ENCODE measurements at regions of chr10 and their contacts with region 1.

Region 1: DNA sequence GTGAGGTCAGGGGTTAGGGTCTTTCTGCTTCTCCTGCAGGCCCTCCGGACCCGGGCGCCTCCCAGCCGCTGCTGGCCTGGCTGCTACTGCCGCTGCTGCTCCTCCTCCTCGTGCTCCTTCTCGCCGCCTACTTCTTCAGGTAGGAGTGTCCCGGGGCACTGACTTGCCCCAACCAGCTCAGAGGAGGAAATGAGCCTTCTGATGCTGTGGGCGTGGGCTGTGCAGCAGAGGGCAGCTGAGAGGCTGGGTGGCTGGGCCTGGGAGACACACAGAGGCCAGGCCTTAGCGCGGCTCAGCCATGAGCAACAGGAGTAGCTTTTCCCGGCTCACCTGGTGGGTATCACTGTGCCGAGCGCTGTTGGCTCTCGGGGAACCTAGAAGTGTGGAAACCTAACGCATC is 78.9 kb downstream of the MKI67 start:
- DNase-seq: peak; percentile 93
- H3K4me3 Mint-ChIP-seq: peak overlapping the region; percentile 81
- H3K27ac Mint-ChIP-seq: peak overlapping the region; percentile 97
- H3K4me1 Mint-ChIP-seq: peaks cover 66% of the 10 kb centered on the region
- H3K27me3 Mint-ChIP-seq: peaks cover 1% of the 10 kb centered on the region

Region 2: GRCh38 chr10:128064108-128064969 is 17.0 kb after region 1 on chr10:
- CTCF ChIA-PET with region 1: interaction called, 37 read pairs
- DNase-seq: peak; percentile 82
- H3K4me3 Mint-ChIP-seq: peak overlapping the region; percentile 53
- H3K27ac Mint-ChIP-seq: peak overlapping the region; percentile 89
- H3K4me1 Mint-ChIP-seq: peaks cover 75% of the 10 kb centered on the region
- H3K27me3 Mint-ChIP-seq: no peaks in the 10 kb centered on the region

Region 3: GRCh38 chr10:128498378-128498730 is 451.0 kb after region 1 on chr10:
- CTCF ChIA-PET with region 1: no interaction called
- DNase-seq: no peak
- H3K4me3 Mint-ChIP-seq: no peak overlapping the region
- H3K27ac Mint-ChIP-seq: no peak overlapping the region
- H3K4me1 Mint-ChIP-seq: no peaks in the 10 kb centered on the region
- H3K27me3 Mint-ChIP-seq: no peaks in the 10 kb centered on the region

Measured in activated naive CD4-positive, alpha-beta T cell treated with anti-CD3 and anti-CD28 coated beads, Interleukin-2, amount 10 ng/mL, durations not matched to agents 7 days and 5 days (primary cell).